Common myeloid progenitor, CD34-positive (primary cell): ENCODE measurements at regions of chr5 and their contacts with region 1.

Region 1: DNA sequence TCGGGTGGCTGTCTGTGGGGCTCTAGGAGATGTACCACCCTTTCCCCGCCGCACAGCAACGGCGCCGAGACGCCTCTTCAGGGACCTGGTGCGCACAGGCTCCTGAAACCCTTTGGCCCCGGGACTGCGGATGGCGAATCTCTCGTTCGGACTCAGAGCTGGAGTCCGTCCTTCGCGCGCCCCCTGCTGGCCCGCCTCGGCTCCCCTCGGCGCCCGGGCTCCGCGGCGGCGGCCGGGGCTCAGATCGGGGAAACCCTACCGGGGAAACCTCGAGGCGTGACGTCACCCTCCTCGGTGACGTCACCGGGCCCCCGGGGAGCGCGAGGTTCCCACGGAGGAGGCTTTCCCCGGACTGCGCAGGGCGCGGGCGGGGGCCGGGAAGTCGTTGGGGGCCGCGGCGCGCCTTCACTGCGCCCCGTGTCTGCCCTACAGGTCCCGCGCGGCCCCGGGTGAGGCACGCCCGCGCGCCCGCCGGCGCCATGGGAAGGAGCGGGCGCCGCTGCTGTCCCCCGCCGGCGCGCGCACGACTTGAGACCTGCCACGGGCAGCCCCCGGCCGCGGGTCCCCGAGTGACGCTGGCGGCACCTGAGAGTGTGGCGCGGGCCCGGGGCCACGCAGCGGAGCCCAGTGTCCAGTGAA is 7.9 kb downstream of the PRR7 start:
- DNase-seq: peak; percentile 88 to 92 (median 91)
- H3K4me3 ChIP-seq: peak overlapping the region; percentile 68 to 87 (median 77)
- H3K27ac ChIP-seq: peak overlapping the region in 1 of 2 experiments; percentile 68
- H3K4me1 ChIP-seq: peaks cover 0 to 40% (median 39%) of the 10 kb centered on the region in 4 experiments
- H3K27me3 ChIP-seq: no peaks in the 10 kb centered on the region

Region 2: GRCh38 chr5:177370488-177371119 is 83.9 kb before region 1 on chr5:
- CTCF ChIA-PET with region 1: interaction called, 11 read pairs
- POLR2A ChIA-PET with region 1: no interaction called
- DNase-seq: peak; percentile 83 to 85 (median 85)
- H3K4me3 ChIP-seq: peak overlapping the region in 1 of 7 experiments; percentile 72
- H3K27ac ChIP-seq: no peak overlapping the region
- H3K4me1 ChIP-seq: peaks cover 0 to 48% (median 41%) of the 10 kb centered on the region in 4 experiments
- H3K27me3 ChIP-seq: no peaks in the 10 kb centered on the region

Region 3: DNA sequence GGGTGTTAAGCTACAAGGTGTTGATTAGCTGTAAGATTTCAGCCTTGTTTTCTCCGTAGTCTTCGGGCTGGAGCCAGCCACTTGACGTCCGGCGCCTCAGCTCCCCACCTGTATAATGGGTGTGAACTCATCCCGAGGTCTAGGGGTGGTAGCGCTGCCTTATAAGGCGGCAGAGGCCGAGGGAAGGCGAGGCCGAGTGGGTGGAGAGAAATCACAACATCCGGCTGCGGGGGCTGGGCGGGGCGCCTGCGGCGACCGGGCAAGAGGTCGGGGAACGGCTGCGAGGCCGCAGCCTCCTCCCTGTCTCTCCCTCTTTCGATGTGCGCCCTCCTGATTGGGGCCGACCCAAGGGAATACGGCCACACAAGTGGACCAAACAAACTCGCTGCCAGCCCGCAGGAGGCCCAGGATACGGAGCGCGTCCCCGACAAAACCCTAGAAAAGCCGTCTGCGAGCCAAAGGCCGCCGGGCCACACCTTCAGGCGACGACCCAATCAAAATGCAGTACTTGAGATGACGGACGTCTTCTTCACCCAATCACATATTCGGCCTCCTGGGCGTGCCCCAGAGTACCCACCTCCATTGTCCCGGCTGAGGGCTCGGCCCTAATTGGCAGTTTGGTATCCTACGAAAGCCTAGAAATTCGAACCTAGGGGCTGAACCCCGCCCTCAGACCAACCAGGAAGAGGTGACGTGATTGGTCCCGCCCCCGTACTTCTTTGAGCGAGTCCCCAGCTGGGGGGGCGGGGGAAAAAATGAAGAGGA is 28.5 kb before region 1 on chr5:
- CTCF ChIA-PET with region 1: interaction called, 387 read pairs
- POLR2A ChIA-PET with region 1: interaction called, 4 read pairs
- DNase-seq: peak; percentile 100
- H3K4me3 ChIP-seq: peak overlapping the region; percentile 59 to 79 (median 71)
- H3K27ac ChIP-seq: peak overlapping the region; percentile 68 to 87
- H3K4me1 ChIP-seq: peaks cover 13 to 54% (median 50%) of the 10 kb centered on the region in 4 experiments
- H3K27me3 ChIP-seq: no peaks in the 10 kb centered on the region

Region 4: DNA sequence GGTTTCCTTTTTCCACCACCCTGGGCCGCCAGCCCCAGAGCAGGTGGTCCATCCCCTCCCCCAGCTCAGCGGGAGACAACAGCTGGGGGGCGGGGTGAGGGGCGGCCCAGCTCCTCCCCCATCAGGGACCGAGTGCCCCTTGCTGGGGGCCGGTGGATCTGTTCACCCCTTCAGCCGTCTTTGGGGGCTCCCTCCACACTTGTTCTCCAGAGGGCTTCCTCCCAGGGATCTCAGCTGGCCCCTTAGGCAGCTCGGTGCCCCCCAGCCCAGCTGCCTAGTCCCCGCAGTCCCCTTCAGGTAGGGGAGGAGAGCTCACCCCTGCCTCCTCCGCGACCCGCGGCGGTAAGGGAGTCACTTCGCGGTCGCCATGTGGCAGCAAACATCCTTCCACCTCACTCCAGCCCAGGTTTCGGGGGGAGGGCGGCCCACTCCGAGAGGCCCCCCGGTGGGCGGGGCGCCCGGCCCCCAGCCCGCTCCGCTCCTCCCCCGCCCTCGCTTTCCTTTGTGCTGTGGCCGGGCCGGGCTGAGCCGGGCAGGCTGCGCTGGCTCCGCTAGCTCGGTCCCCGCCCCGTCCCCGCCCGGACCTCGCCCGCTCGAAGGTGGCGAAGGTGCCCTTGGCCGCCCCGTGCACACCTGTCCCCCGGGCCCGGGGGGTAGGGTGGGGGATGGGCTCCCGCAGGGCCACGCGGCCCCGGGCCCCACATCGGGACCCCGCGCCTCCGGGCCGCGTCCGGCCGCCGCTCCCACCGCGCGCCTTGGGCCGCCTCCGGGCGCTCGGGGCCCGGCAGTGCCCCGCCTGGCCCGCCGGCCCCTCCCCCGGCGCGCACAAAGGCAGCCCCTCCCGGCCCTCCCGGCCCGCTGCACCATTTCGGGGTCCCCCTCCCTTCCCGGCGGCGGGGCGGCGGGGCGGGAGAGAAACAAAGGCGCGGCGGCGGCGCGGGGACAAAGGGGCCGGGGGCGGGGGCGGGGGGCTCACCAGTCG is 18.2 kb after region 1 on chr5:
- CTCF ChIA-PET with region 1: interaction called, 62 read pairs
- POLR2A ChIA-PET with region 1: interaction called, 4 read pairs
- DNase-seq: peak; percentile 59 to 88 (median 85)
- H3K4me3 ChIP-seq: peak overlapping the region in 6 of 7 experiments; percentile 36 to 76 (median 60)
- H3K27ac ChIP-seq: peak overlapping the region in 1 of 2 experiments; percentile 5
- H3K4me1 ChIP-seq: peaks cover 0 to 36% (median 32%) of the 10 kb centered on the region in 4 experiments
- H3K27me3 ChIP-seq: no peaks in the 10 kb centered on the region

Region 5: GRCh38 chr5:177478711-177479646 is 24.5 kb after region 1 on chr5:
- CTCF ChIA-PET with region 1: interaction called, 62 read pairs
- POLR2A ChIA-PET with region 1: no interaction called
- DNase-seq: peak; percentile 70 to 89 (median 86)
- H3K4me3 ChIP-seq: no peak overlapping the region
- H3K27ac ChIP-seq: peak overlapping the region in 1 of 2 experiments; percentile 56
- H3K4me1 ChIP-seq: peaks cover 0 to 46% (median 40%) of the 10 kb centered on the region in 4 experiments
- H3K27me3 ChIP-seq: no peaks in the 10 kb centered on the region

Region 6: GRCh38 chr5:177497292-177498033 is 42.9 kb after region 1 on chr5 and contains the start of gene PDLIM7:
- CTCF ChIA-PET with region 1: interaction called, 57 read pairs
- POLR2A ChIA-PET with region 1: interaction called, 12 read pairs
- DNase-seq: peak; percentile 92 to 96 (median 95)
- H3K4me3 ChIP-seq: peak within 1 kb of the TSS; percentile 39 to 78 (median 69)
- H3K27ac ChIP-seq: peak within 1 kb of the TSS in 1 of 2 experiments; percentile 66
- H3K4me1 ChIP-seq: peaks cover 2 to 63% (median 50%) of the 10 kb centered on the region in 4 experiments
- H3K27me3 ChIP-seq: peaks cover 0 to 5% (median 0%) of the 10 kb centered on the region in 5 experiments